Activated CD4-positive, alpha-beta T cell treated with anti-CD3 and anti-CD28 coated beads for 36 hours (primary cell): ENCODE measurements at regions of chr15 and their contacts with region 1.

Region 1: DNA sequence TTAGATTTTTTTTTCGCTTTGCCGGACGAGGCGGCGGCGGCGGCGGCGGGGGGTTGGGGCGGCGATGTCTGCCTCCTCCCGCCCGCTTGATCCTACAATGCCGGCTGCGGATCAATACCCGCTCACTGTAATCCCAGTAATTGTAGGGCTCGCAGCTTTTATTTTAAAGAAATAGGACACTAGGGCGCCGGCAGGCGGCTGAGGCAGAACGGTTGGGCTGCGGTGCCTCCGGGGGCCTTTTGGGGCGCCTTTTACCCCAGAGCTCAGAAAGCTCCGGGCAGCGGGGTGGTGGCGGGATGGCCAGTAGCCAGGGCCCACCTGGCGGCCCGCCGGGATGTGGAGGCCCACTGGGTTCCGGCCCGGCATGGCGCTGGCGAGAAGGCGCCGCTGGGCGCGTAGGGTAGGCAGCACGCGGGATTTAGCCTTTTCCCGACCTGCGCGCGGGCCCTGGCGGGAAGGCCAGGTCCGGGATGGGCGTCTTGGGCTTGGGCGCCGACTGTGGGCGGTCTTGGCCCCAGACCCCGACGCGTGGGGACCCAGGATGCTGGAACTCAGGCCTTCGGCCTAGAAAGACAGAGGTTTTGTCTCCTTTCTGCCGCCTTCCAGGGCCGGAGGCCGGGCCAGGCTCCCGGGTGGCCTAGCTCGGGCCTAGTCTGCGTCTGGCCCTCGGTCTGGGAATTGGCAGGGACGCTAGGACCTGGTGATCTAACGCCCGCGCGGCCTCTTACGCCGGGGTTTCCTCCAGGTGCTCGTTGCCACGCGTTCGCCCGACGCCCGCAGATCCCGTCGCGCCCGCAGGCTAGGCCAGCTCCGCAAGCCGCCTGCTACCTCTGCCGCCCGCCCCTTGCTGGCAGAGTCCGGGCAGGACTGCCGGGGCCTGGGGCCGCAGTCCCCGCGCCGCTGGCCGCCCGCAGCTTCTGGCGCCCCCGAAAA is 15.5 kb upstream of the ONECUT1 start:
- DNase-seq: peak; percentile 49
- ATAC-seq: peak; percentile 39
- H3K4me3 Mint-ChIP-seq: no peak overlapping the region
- H3K27ac Mint-ChIP-seq: no peak overlapping the region
- H3K4me1 Mint-ChIP-seq: peaks cover 19% of the 10 kb centered on the region
- H3K27me3 Mint-ChIP-seq: peaks cover 65% of the 10 kb centered on the region

Region 2: DNA sequence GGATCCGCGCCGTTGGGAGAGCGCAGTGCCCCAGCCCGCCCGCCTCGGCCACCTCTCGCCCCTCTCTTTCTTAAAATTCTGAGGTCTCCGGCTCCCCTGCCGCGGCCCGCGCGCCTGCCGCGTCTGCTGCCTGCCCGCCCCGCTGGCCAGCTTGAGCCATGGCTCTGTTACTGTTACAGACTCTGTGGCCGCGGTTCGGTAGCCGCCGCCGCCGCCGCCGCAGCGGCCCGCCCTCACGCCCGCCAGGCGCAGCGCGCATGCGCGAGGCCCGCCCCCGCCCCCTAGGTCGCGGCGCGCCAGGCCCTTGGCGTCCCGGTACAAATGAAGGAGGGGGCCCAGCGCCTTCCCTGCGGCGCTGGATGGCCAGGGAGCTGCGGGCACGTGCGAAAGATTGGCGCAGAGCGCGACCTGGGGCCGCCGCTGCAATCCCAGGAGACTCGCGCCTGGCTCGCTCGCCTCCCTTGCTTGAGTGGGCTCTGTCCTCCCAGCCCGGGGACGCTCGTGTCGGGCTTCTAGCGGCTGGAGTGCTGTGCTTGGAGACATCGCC is 15.4 kb before region 1 on chr15 and contains the start of gene ONECUT1:
- CTCF ChIA-PET with region 1: interaction called, 6 read pairs
- POLR2A ChIA-PET with region 1: no interaction called
- intact Hi-C with region 1: loop called (anchors 2 kb)
- DNase-seq: peak; percentile 74
- ATAC-seq: peak; percentile 70
- H3K4me3 Mint-ChIP-seq: peak within 1 kb of the TSS; percentile 56
- H3K27ac Mint-ChIP-seq: no peak within 1 kb of the TSS
- H3K4me1 Mint-ChIP-seq: peaks cover 15% of the 10 kb centered on the region
- H3K27me3 Mint-ChIP-seq: peaks cover 75% of the 10 kb centered on the region
- total RNA-seq, gene ONECUT1: not detected

Region 3: GRCh38 chr15:52822475-52822874 is 16.9 kb after region 1 on chr15:
- CTCF ChIA-PET with region 1: no interaction called
- POLR2A ChIA-PET with region 1: no interaction called
- intact Hi-C with region 1: no loop called
- DNase-seq: no peak
- ATAC-seq: no peak
- H3K4me3 Mint-ChIP-seq: no peak overlapping the region
- H3K27ac Mint-ChIP-seq: no peak overlapping the region
- H3K4me1 Mint-ChIP-seq: no peaks in the 10 kb centered on the region
- H3K27me3 Mint-ChIP-seq: peaks cover 47% of the 10 kb centered on the region